ENCODE measurements at regions of chr6 and their contacts with region 1.

Region 1: GRCh38 chr6:134882426-134883038 is 67.4 kb downstream of the ALDH8A1 start:
- DNase-seq: peak; percentile 35
- ATAC-seq: peak; percentile 57
- H3K4me3 Mint-ChIP-seq: no peak overlapping the region
- H3K27ac Mint-ChIP-seq: no peak overlapping the region
- H3K4me1 Mint-ChIP-seq: no peaks in the 10 kb centered on the region
- H3K27me3 Mint-ChIP-seq: peaks cover 11% of the 10 kb centered on the region
- CTCF ChIP-seq: peak; percentile 84

Region 2: GRCh38 chr6:133923938-133924593 is 958.5 kb before region 1 on chr6:
- CTCF ChIA-PET with region 1: no interaction called
- POLR2A ChIA-PET with region 1: no interaction called
- intact Hi-C with region 1: loop called (anchors 1 kb)
- DNase-seq: no peak
- ATAC-seq: peak; percentile 88
- H3K4me3 Mint-ChIP-seq: no peak overlapping the region
- H3K27ac Mint-ChIP-seq: no peak overlapping the region
- H3K4me1 Mint-ChIP-seq: no peaks in the 10 kb centered on the region
- H3K27me3 Mint-ChIP-seq: peaks cover 22% of the 10 kb centered on the region
- CTCF ChIP-seq: peak; percentile 56

Region 3: DNA sequence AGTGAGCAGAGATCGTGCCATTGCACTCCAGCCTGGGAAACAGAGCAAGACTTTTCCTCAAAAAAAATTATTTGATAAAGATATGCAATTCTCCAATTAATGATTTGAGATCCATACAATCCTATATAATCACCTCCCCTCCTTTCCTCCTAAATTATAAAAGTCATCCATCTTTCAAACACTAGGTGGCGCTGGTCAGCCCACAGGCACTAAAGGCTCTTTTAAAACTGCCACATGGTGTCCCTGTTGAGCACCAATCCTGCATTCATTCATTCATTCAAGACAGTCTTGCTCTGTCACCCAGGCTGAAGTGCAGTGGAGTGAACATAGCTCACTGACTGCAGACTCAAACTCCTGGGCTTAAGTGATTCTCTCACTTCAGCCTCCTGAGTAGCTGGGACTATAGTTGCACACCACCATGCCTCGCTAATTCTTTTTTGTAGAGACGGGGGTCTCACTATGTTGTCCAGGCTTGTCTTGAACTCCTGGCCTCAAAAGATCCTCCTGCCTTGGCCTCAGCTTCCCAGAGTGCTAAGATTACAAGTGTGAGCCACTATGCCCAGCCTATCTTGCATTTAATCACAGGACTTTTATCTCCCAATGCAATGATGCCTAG is 771.4 kb before region 1 on chr6:
- CTCF ChIA-PET with region 1: interaction called, 3 read pairs
- POLR2A ChIA-PET with region 1: no interaction called
- intact Hi-C with region 1: loop called (anchors 1 kb)
- DNase-seq: no peak
- ATAC-seq: no peak
- H3K4me3 Mint-ChIP-seq: no peak overlapping the region
- H3K27ac Mint-ChIP-seq: no peak overlapping the region
- H3K4me1 Mint-ChIP-seq: no peaks in the 10 kb centered on the region
- H3K27me3 Mint-ChIP-seq: peaks cover 17% of the 10 kb centered on the region
- CTCF ChIP-seq: peak; percentile 27

Region 4: GRCh38 chr6:134123666-134124208 is 758.8 kb before region 1 on chr6:
- CTCF ChIA-PET with region 1: interaction called, 13 read pairs
- POLR2A ChIA-PET with region 1: no interaction called
- intact Hi-C with region 1: loop called (anchors 1 kb)
- DNase-seq: no peak
- ATAC-seq: peak; percentile 52
- H3K4me3 Mint-ChIP-seq: no peak overlapping the region
- H3K27ac Mint-ChIP-seq: no peak overlapping the region
- H3K4me1 Mint-ChIP-seq: no peaks in the 10 kb centered on the region
- H3K27me3 Mint-ChIP-seq: peaks cover 2% of the 10 kb centered on the region
- CTCF ChIP-seq: peak; percentile 62

Region 5: GRCh38 chr6:134161036-134161435 is 721.5 kb before region 1 on chr6:
- CTCF ChIA-PET with region 1: interaction called, 20 read pairs
- POLR2A ChIA-PET with region 1: no interaction called
- intact Hi-C with region 1: loop called (anchors 1 kb)
- DNase-seq: no peak
- ATAC-seq: no peak
- H3K4me3 Mint-ChIP-seq: no peak overlapping the region
- H3K27ac Mint-ChIP-seq: no peak overlapping the region
- H3K4me1 Mint-ChIP-seq: no peaks in the 10 kb centered on the region
- H3K27me3 Mint-ChIP-seq: no peaks in the 10 kb centered on the region
- CTCF ChIP-seq: no peak

Region 6: DNA sequence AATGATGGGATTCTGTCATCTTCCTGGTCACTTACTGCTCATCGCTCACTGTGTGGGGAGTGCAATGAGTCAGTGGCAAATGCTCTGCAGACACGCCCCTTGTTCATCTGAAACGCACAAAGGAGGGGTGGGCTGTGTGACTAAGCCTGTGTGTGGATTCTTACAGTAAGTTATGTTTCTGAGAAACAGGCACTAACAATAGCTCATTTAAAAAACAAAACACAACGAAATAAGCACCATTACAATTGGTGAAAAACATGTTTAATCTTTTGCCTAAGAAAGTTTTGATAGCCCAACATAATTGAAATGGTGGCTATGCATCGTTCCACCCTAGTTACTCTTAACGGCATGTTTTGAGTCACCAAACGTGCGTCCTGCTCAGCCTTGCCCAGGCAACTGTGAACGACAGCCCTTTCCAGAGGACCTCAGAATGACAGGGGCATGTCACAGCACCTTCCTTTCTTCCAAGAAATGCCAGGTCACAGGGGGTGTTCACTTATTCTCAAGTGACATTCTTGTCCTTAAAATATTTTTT is 446.2 kb before region 1 on chr6:
- CTCF ChIA-PET with region 1: no interaction called
- POLR2A ChIA-PET with region 1: no interaction called
- intact Hi-C with region 1: no loop called
- DNase-seq: no peak
- ATAC-seq: peak; percentile 90
- H3K4me3 Mint-ChIP-seq: peak overlapping the region; percentile 70
- H3K27ac Mint-ChIP-seq: peak overlapping the region; percentile 79
- H3K4me1 Mint-ChIP-seq: peaks cover 23% of the 10 kb centered on the region
- H3K27me3 Mint-ChIP-seq: no peaks in the 10 kb centered on the region
- CTCF ChIP-seq: no peak

Region 7: GRCh38 chr6:134464690-134465411 is 417.7 kb before region 1 on chr6:
- CTCF ChIA-PET with region 1: no interaction called
- POLR2A ChIA-PET with region 1: no interaction called
- intact Hi-C with region 1: loop called (anchors 10 kb)
- DNase-seq: no peak
- ATAC-seq: peak; percentile 28
- H3K4me3 Mint-ChIP-seq: no peak overlapping the region
- H3K27ac Mint-ChIP-seq: no peak overlapping the region
- H3K4me1 Mint-ChIP-seq: peaks cover 16% of the 10 kb centered on the region
- H3K27me3 Mint-ChIP-seq: no peaks in the 10 kb centered on the region
- CTCF ChIP-seq: no peak

Region 8: GRCh38 chr6:134822920-134823709 is 59.4 kb before region 1 on chr6:
- CTCF ChIA-PET with region 1: interaction called, 4 read pairs
- POLR2A ChIA-PET with region 1: no interaction called
- intact Hi-C with region 1: loop called (anchors 1 kb)
- DNase-seq: no peak
- ATAC-seq: peak; percentile 77
- H3K4me3 Mint-ChIP-seq: no peak overlapping the region
- H3K27ac Mint-ChIP-seq: no peak overlapping the region
- H3K4me1 Mint-ChIP-seq: peaks cover 10% of the 10 kb centered on the region
- H3K27me3 Mint-ChIP-seq: peaks cover 2% of the 10 kb centered on the region
- CTCF ChIP-seq: peak; percentile 45

Region 9: DNA sequence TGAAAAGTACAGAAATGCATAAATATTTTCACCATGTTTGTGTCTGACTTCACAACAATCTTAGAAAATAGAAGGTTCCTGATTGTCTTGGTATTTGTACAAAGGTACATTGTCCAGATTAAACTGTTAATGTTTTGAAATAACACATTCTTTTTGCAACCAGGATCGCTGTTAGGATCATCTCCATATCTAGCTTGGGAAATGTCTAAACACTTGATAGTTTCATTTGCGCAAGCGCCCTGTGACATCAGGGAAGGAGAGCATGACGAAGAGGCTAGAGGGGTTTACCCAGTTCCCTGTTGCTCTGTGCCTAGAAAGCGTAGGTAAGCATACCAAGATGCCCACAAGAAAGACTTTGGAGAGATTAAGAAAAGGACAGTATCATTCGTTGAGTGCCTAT is 47.9 kb after region 1 on chr6:
- CTCF ChIA-PET with region 1: no interaction called
- POLR2A ChIA-PET with region 1: no interaction called
- intact Hi-C with region 1: no loop called
- DNase-seq: no peak
- ATAC-seq: no peak
- H3K4me3 Mint-ChIP-seq: no peak overlapping the region
- H3K27ac Mint-ChIP-seq: no peak overlapping the region
- H3K4me1 Mint-ChIP-seq: no peaks in the 10 kb centered on the region
- H3K27me3 Mint-ChIP-seq: no peaks in the 10 kb centered on the region
- CTCF ChIP-seq: no peak